A549 (cell line): ENCODE measurements at regions of chr9 and their contacts with region 1.

Region 1: GRCh38 chr9:114082017-114082762 is 4.1 kb upstream of the AMBP start:
- DNase-seq: peak; percentile 92 to 94
- ATAC-seq: peak; percentile 74 to 83
- H3K4me3 ChIP-seq: no peak overlapping the region
- H3K27ac ChIP-seq: peak overlapping the region; percentile 93 to 94
- H3K4me1 ChIP-seq: peaks cover 75% of the 10 kb centered on the region
- CTCF ChIP-seq: peak; percentile 92
- EP300 ChIP-seq: no peak
- POLR2A ChIP-seq: no peak
- RAD21 ChIP-seq: peak; percentile 93 to 95

Region 2: GRCh38 chr9:114011313-114011712 is 70.9 kb before region 1 on chr9:
- CTCF ChIA-PET with region 1: no interaction called
- POLR2A ChIA-PET with region 1: no interaction called
- DNase-seq: no peak
- ATAC-seq: no peak
- H3K4me3 ChIP-seq: no peak overlapping the region
- H3K27ac ChIP-seq: no peak overlapping the region
- H3K4me1 ChIP-seq: no peaks in the 10 kb centered on the region
- CTCF ChIP-seq: no peak
- EP300 ChIP-seq: no peak
- POLR2A ChIP-seq: no peak
- RAD21 ChIP-seq: no peak

Region 3: GRCh38 chr9:114059047-114059803 is 23.0 kb before region 1 on chr9:
- CTCF ChIA-PET with region 1: interaction called, 16 read pairs
- POLR2A ChIA-PET with region 1: no interaction called
- DNase-seq: no peak
- ATAC-seq: peak in 1 of 2 experiments; percentile 35; a peak in 3 of 6 replicates
- H3K4me3 ChIP-seq: no peak overlapping the region
- H3K27ac ChIP-seq: no peak overlapping the region
- H3K4me1 ChIP-seq: no peaks in the 10 kb centered on the region
- CTCF ChIP-seq: no peak
- EP300 ChIP-seq: no peak
- POLR2A ChIP-seq: no peak
- RAD21 ChIP-seq: no peak

Region 4: GRCh38 chr9:114098016-114098935 is 16.1 kb after region 1 on chr9:
- CTCF ChIA-PET with region 1: interaction called, 80 read pairs
- POLR2A ChIA-PET with region 1: no interaction called
- DNase-seq: peak; percentile 70 to 75
- ATAC-seq: peak; percentile 81 to 87
- H3K4me3 ChIP-seq: peak overlapping the region; percentile 84
- H3K27ac ChIP-seq: peak overlapping the region; percentile 71 to 91
- H3K4me1 ChIP-seq: peaks cover 27% of the 10 kb centered on the region
- CTCF ChIP-seq: no peak
- EP300 ChIP-seq: no peak
- POLR2A ChIP-seq: no peak
- RAD21 ChIP-seq: no peak

Region 5: DNA sequence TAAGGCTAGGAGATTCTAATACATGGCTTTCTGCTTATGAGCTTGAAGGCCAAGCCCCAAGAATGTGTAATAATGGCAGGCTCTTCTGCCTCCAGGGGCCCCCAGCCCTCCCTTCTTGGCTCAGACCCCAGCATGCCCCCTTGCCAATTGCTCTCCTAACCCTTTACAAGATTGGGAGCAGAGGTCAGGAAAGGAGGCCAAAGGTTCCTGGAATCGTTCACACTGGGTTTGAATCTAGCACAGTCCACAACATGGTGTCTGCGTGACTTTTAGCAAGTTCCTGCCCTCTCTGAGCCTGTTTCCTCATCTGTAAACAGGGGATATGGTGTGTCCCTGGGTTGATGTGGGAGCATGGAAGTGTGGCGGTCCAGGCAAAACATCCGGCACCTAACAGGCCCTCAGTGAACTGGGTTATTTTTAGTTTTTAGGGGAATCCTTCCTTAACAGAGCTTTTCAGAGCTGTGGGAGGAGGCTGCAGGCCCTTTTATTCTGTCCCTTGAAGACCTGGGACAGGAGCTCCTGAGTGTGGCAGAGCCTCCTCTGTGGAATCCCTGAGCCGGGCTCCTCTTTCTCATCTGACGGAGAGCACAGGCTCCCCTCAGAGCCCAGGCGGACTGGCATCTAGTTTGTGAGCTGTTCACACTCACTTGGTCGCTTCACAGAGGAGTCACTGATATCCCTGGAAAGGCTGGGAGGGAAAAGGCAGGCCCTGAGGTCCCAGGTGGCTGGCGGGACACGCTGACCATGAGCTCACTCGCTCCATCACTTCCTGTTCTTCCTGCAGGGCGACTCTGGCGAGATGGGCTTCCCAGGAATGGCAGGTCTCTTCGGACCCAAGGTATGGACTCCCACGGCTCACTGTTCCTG is 217.3 kb after region 1 on chr9:
- CTCF ChIA-PET with region 1: interaction called, 191 read pairs
- POLR2A ChIA-PET with region 1: no interaction called
- DNase-seq: no peak
- ATAC-seq: no peak
- H3K4me3 ChIP-seq: no peak overlapping the region
- H3K27ac ChIP-seq: no peak overlapping the region
- H3K4me1 ChIP-seq: no peaks in the 10 kb centered on the region
- CTCF ChIP-seq: no peak
- EP300 ChIP-seq: no peak
- POLR2A ChIP-seq: no peak
- RAD21 ChIP-seq: no peak